ENCODE measurements at regions of chr3 and their contacts with region 1.

Region 1: GRCh38 chr3:132535575-132536441 is 61.3 kb upstream of the ACKR4 start:
- DNase-seq: peak in 8 of 9 donors; percentile 6 to 47 (median 32)
- ATAC-seq: peak; percentile 65
- H3K4me3 ChIP-seq: no peak overlapping the region
- H3K4me3 Mint-ChIP-seq: no peak overlapping the region
- H3K27ac ChIP-seq: no peak overlapping the region
- H3K27ac Mint-ChIP-seq: peak overlapping the region in 1 of 9 donors; percentile 13
- H3K4me1 ChIP-seq: no peaks in the 10 kb centered on the region
- H3K4me1 Mint-ChIP-seq: peaks cover 0 to 10% (median 0%) of the 10 kb centered on the region in 7 donors
- H3K27me3 ChIP-seq: no peaks in the 10 kb centered on the region
- H3K27me3 Mint-ChIP-seq: no peaks in the 10 kb centered on the region

Region 2: DNA sequence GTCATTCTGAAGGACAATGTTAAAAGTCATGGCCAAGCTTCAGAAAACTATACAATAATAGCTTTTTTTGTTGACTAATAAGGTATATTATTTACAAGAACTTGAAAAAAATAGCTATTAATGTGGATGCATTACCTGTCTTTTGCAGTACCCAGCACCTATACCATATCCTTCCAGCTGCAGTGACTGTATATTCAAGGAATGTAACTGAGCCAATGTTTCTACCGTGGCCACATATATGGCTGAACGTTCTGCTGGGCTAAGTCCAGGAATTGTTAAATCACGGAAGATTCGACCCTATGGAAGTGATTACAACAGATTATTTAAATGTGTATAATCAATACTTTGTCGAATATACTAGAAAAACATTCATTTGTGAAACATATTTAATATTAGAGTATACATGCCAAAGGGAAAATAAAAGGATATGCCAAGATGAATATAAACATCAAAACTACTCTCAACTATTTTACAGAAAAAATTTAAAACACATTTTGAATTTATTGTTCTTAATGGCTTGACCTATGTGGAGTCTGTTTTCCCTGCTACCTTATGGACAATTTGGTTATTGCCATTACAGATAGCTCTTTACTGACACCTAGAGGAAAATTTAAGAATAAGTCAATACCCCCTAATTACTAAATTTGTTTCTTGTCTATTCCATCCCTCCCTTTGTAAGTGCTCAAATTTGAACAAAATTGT is 106.2 kb after region 1 on chr3:
- CTCF ChIA-PET with region 1: interaction called, 11 read pairs
- POLR2A ChIA-PET with region 1: no interaction called
- intact Hi-C with region 1: loop called (anchors 1 kb)
- DNase-seq: peak in 5 of 9 donors; percentile 17 to 45 (median 36)
- ATAC-seq: peak; percentile 67
- H3K4me3 ChIP-seq: no peak overlapping the region
- H3K4me3 Mint-ChIP-seq: no peak overlapping the region
- H3K27ac ChIP-seq: no peak overlapping the region
- H3K27ac Mint-ChIP-seq: no peak overlapping the region
- H3K4me1 ChIP-seq: no peaks in the 10 kb centered on the region
- H3K4me1 Mint-ChIP-seq: peaks cover 0 to 11% (median 3%) of the 10 kb centered on the region in 7 donors
- H3K27me3 ChIP-seq: no peaks in the 10 kb centered on the region
- H3K27me3 Mint-ChIP-seq: no peaks in the 10 kb centered on the region

Region 3: GRCh38 chr3:132709761-132710160 is 174.0 kb after region 1 on chr3:
- CTCF ChIA-PET with region 1: no interaction called
- POLR2A ChIA-PET with region 1: no interaction called
- intact Hi-C with region 1: loop called in 1 of 2 experiments (anchors 10 kb)
- DNase-seq: no peak
- ATAC-seq: no peak
- H3K4me3 ChIP-seq: no peak overlapping the region
- H3K4me3 Mint-ChIP-seq: no peak overlapping the region
- H3K27ac ChIP-seq: no peak overlapping the region
- H3K27ac Mint-ChIP-seq: peak overlapping the region in 1 of 9 donors; percentile 66
- H3K4me1 ChIP-seq: no peaks in the 10 kb centered on the region
- H3K4me1 Mint-ChIP-seq: peaks cover 3 to 33% (median 13%) of the 10 kb centered on the region in 7 donors
- H3K27me3 ChIP-seq: no peaks in the 10 kb centered on the region
- H3K27me3 Mint-ChIP-seq: no peaks in the 10 kb centered on the region

Region 4: DNA sequence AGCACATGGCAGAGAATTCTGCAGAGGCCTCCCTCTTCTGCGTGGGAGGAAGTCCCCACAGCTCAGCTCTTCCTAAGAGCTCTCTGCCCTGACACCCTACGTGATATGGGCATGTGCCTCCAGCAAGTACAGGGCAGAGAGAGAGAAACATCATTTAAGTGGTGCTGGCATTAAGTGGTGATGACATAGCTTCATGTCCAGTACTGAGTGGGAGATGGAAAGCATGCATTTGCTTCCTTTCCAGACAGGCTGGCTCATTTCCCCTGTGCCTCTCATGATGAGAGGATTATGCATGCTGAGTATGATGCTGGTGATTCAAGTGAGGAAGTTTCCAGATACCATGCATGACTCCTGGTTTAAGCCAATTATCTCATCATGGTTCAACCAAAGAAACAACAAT is 890.9 kb after region 1 on chr3:
- CTCF ChIA-PET with region 1: no interaction called
- POLR2A ChIA-PET with region 1: no interaction called
- intact Hi-C with region 1: loop called in 1 of 2 experiments (anchors 1 kb)
- DNase-seq: no peak
- ATAC-seq: no peak
- H3K4me3 ChIP-seq: no peak overlapping the region
- H3K4me3 Mint-ChIP-seq: no peak overlapping the region
- H3K27ac ChIP-seq: no peak overlapping the region
- H3K27ac Mint-ChIP-seq: peak overlapping the region in 1 of 9 donors; percentile 8
- H3K4me1 ChIP-seq: peaks cover 0 to 3% of the 10 kb centered on the region in 2 donors
- H3K4me1 Mint-ChIP-seq: peaks cover 0 to 4% (median 0%) of the 10 kb centered on the region in 7 donors
- H3K27me3 ChIP-seq: no peaks in the 10 kb centered on the region
- H3K27me3 Mint-ChIP-seq: peaks cover 0 to 7% (median 0%) of the 10 kb centered on the region in 5 donors

Measured in naive thymus-derived CD4-positive, alpha-beta T cell (primary cell).